Left ventricle myocardium inferior (tissue), 1 donor: ENCODE measurements at regions of chr3 and their contacts with region 1.

Region 1: DNA sequence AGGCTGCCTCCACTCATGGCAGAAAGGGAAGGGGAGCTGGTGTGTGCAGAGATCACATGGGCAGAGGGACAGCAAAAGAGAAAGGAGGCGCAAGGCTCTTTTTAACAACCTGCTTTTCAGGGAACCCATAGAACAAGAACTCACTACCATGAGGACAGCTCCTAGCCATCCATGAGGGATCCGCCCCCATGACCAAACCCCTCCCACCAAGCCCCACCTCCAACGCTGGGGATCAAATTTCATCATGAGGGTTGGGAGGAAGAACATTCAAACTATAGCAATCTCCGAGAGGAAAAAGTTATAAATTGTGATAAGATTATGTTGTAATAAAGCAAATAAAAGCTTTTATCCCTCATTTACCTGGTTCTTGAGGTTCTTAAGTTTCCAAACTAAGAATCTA is 84.7 kb upstream of the LMCD1 start:
- DNase-seq: no peak
- H3K4me3 ChIP-seq: peak overlapping the region; percentile 35
- H3K27ac ChIP-seq: no peak overlapping the region
- H3K4me1 ChIP-seq: no peaks in the 10 kb centered on the region
- H3K27me3 ChIP-seq: no peaks in the 10 kb centered on the region
- CTCF ChIP-seq: no peak

Region 2: DNA sequence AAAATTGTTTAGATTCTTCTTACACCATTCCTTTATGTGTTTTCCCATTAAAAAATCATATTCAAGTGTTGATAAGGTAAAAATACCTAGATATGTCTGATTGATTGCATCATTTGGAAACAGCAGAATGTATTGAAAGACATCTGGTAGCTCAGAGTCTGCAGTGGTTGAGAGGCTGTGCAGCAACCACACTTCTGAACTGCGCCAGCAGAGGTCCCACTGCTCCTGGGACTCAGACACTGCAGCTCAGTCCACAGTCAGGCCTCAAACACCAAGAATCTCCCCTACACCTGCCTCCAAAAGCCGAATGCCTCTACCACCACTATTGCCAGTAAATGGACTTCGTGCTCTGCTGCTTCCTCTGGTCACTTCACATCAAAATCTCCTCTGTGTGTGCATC is 92.2 kb before region 1 on chr3:
- intact Hi-C with region 1: loop called (anchors 5 kb)
- DNase-seq: peak; percentile 23
- H3K4me3 ChIP-seq: no peak overlapping the region
- H3K27ac ChIP-seq: no peak overlapping the region
- H3K4me1 ChIP-seq: peaks cover 4% of the 10 kb centered on the region
- H3K27me3 ChIP-seq: no peaks in the 10 kb centered on the region
- CTCF ChIP-seq: peak; percentile 61

Region 3: DNA sequence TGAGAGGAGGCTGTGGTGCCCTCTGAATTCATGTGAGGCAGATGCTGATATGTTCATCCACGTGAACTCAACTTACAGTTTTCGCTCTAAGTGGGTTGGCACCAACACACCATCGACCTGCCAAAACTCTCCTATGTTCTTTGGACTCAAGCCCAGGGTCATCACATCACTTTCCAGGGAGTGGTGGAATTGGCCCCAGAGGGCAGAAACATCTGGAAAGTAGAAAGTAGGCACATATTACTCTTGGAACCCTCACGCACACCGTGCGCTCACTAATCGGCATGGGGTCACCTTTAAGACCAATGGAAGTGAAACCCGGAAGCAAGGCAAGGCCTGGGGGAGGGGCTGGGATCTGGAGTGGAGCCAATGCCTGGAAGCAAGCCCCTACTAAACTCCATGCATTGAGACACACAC is 186.2 kb after region 1 on chr3:
- intact Hi-C with region 1: no loop called
- DNase-seq: peak; percentile 51
- H3K4me3 ChIP-seq: no peak overlapping the region
- H3K27ac ChIP-seq: peak overlapping the region; percentile 44
- H3K4me1 ChIP-seq: peaks cover 30% of the 10 kb centered on the region
- H3K27me3 ChIP-seq: no peaks in the 10 kb centered on the region
- CTCF ChIP-seq: no peak

Region 4: GRCh38 chr3:9122732-9123364 is 705.9 kb after region 1 on chr3:
- intact Hi-C with region 1: no loop called
- DNase-seq: no peak
- H3K4me3 ChIP-seq: no peak overlapping the region
- H3K27ac ChIP-seq: no peak overlapping the region
- H3K4me1 ChIP-seq: no peaks in the 10 kb centered on the region
- H3K27me3 ChIP-seq: no peaks in the 10 kb centered on the region
- CTCF ChIP-seq: no peak